WTC11 (cell line): ENCODE measurements at regions of chr4 and their contacts with region 1.

Region 1: DNA sequence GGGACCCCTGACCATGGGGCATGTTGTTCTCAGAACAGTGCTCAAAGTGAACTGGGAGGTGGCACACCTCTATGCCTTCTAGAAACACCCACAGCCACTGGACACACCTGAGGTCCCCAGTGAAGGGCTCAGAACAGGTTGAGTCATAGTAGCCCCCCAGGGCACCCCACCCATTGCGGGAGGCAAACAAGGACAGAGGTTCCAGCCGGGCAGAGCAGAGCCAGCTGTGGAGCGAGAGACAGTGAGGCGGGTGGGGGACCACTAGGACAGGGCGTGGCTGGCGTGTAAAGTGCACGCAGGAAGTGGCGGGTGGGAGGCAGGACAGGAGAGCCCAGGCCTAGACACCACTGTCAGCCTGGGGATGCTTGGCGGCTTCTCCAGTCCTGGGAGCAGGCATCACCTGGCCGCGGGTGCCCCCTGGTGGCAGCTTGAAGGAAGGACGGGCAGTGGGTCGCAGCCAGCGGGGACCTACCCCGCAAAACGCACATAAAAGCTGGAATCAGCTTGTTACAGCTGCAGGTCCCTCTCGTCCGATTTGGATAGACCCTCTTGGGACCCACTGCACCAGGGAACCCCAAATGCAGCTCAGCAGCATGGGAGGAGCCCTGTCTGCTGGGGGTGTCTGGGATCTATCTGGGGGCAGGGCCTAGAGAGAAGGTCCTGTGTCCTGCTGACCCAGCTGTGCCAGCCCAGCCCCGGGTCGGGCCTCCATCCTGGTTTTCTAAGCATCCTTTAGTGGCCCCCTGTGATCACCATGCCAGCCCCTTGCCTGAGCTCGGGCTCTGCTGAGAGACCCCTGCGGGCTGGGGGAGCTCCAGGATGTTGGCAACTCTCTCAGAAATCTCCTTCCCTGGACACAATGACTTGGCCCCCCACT is 57.6 kb downstream of the WFS1 start:
- DNase-seq: peak; percentile 89
- ATAC-seq: peak; percentile 79
- H3K4me3 Mint-ChIP-seq: no peak overlapping the region
- H3K27ac Mint-ChIP-seq: no peak overlapping the region
- H3K4me1 Mint-ChIP-seq: 0 out of 2 replicates have a peak, but pooled peaks cover 3% of the 10 kb centered on the region
- H3K27me3 Mint-ChIP-seq: no peaks in the 10 kb centered on the region
- CTCF ChIP-seq: peak; percentile 95

Region 2: GRCh38 chr4:6134612-6135220 is 192.6 kb before region 1 on chr4:
- CTCF ChIA-PET with region 1: interaction called, 11 read pairs
- POLR2A ChIA-PET with region 1: no interaction called
- DNase-seq: no peak
- ATAC-seq: peak; percentile 77
- H3K4me3 Mint-ChIP-seq: no peak overlapping the region
- H3K27ac Mint-ChIP-seq: no peak overlapping the region
- H3K4me1 Mint-ChIP-seq: peaks cover 21% of the 10 kb centered on the region
- H3K27me3 Mint-ChIP-seq: no peaks in the 10 kb centered on the region; the same call in 1 of the 2 replicates
- CTCF ChIP-seq: no peak

Region 3: DNA sequence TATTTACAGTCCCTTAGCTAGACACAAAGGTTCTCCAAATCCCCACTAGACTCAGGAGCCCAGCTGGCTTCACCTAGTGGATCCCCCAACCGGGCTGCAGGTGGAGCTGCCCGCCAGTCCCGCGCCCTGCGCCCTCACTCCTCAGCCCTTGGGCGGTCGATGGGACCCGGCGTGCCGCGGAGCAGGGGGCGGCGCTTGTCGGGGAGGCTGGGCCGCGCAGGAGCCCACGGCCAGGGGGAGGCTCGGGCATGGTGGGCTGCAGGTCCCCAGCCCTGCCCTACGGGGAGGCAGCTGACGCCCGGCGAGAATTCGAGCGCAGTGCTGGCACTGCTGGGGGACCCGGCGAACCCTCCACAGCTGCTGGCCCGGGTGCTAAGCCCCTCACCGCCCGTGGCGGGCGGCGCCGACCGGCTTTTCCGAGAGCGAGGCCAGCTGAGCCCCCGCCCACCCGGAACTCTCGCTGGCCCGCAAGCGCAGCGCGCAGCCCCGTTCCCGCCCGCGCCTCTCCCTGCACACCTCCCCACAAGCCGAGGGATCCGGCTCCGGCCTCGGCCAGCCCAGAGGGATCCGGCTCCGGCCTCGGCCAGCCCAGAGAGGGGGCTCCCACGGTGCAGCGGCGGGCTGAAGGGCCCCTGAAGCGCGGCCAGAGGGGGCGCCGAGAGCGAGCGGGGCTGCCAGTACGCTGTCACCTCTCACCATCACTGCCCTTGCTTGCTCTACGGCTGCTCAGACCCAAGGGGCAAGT is 18.2 kb before region 1 on chr4:
- CTCF ChIA-PET with region 1: interaction called, 38 read pairs
- POLR2A ChIA-PET with region 1: no interaction called
- DNase-seq: peak; percentile 71
- ATAC-seq: peak; percentile 79
- H3K4me3 Mint-ChIP-seq: peak overlapping the region; percentile 69
- H3K27ac Mint-ChIP-seq: no peak overlapping the region
- H3K4me1 Mint-ChIP-seq: no peaks in the 10 kb centered on the region; the same call in 1 of the 2 replicates
- H3K27me3 Mint-ChIP-seq: peaks cover 31% of the 10 kb centered on the region
- CTCF ChIP-seq: no peak

Region 4: GRCh38 chr4:6362896-6363295 is 35.6 kb after region 1 on chr4:
- CTCF ChIA-PET with region 1: interaction called, 11 read pairs
- POLR2A ChIA-PET with region 1: no interaction called
- DNase-seq: peak; percentile 77
- ATAC-seq: peak; percentile 55
- H3K4me3 Mint-ChIP-seq: no peak overlapping the region
- H3K27ac Mint-ChIP-seq: no peak overlapping the region
- H3K4me1 Mint-ChIP-seq: peaks cover 11% of the 10 kb centered on the region
- H3K27me3 Mint-ChIP-seq: peaks cover 3% of the 10 kb centered on the region; the same call in 1 of the 2 replicates
- CTCF ChIP-seq: no peak

Region 5: GRCh38 chr4:6390356-6390755 is 63.1 kb after region 1 on chr4:
- CTCF ChIA-PET with region 1: interaction called, 10 read pairs
- POLR2A ChIA-PET with region 1: no interaction called
- DNase-seq: no peak
- ATAC-seq: peak; percentile 40; the same call in 1 of the 2 replicates
- H3K4me3 Mint-ChIP-seq: no peak overlapping the region
- H3K27ac Mint-ChIP-seq: no peak overlapping the region
- H3K4me1 Mint-ChIP-seq: no peaks in the 10 kb centered on the region
- H3K27me3 Mint-ChIP-seq: no peaks in the 10 kb centered on the region
- CTCF ChIP-seq: no peak

Region 6: DNA sequence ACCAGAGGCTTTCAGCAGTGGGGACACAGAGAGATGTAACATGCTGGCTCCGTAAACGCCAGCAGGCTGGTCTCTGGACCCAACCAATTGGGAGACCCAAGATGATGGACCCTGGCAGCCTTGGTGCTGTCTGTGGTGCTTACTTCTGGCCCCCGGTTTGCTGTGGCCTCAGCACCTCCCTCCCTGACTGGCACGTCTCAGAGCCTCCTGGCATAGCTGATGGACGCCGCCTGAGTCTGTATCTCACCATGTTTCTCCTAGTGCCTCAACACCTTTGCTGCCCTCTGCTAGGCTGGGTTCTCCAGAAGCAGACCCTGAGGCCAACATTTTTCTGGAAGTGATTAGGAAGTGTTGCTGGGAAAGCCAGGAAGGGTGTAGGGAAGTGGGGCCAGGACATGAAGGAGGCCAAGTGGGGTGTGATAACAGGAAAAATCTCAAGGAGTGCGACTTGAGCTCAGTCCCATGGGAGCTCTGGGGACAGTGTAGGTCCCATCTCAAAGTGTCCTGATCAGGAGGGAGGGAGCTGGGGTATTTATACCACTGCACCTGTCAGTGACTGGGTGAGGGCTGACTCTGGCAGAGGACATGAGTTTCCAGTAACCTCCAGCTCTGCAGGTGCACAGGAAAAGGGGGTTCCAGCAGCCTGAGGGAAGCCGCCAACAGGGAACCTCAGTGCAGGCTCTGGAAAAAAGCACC is 113.4 kb after region 1 on chr4:
- CTCF ChIA-PET with region 1: no interaction called
- POLR2A ChIA-PET with region 1: no interaction called
- DNase-seq: no peak
- ATAC-seq: no peak
- H3K4me3 Mint-ChIP-seq: no peak overlapping the region
- H3K27ac Mint-ChIP-seq: no peak overlapping the region
- H3K4me1 Mint-ChIP-seq: 0 out of 2 replicates have a peak, but pooled peaks cover 3% of the 10 kb centered on the region
- H3K27me3 Mint-ChIP-seq: no peaks in the 10 kb centered on the region; the same call in 1 of the 2 replicates
- CTCF ChIP-seq: no peak

Region 7: DNA sequence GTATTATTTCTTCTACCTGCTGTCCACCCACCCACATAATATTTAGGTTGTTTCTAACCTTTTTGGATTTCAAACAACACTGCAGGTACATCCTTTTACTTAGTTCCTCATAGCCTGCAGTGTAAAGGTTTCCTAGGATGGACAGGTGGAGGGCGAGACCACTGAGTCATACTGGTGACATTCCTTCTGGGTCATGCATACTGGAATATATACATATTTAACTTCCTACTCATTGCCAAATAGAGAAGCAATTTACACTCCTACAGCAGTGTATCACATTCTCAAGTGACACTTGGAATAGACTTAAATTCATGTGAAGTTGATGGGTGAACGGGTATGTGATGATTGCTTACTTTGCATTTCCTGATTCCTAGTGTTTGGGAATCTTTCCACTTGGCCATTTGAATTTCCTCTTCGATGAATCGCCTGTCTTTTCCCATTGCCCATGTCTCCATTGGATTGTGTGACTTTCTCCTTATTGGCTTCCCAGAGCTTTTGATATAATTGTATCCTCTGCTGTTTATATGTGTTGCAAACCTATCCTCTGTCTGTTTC is 153.3 kb after region 1 on chr4:
- CTCF ChIA-PET with region 1: no interaction called
- POLR2A ChIA-PET with region 1: no interaction called
- DNase-seq: no peak
- ATAC-seq: no peak
- H3K4me3 Mint-ChIP-seq: no peak overlapping the region
- H3K27ac Mint-ChIP-seq: no peak overlapping the region
- H3K4me1 Mint-ChIP-seq: peaks cover 10% of the 10 kb centered on the region
- H3K27me3 Mint-ChIP-seq: peaks cover 10% of the 10 kb centered on the region
- CTCF ChIP-seq: no peak

Region 8: GRCh38 chr4:6574747-6575502 is 247.6 kb after region 1 on chr4 and contains the start of gene MAN2B2:
- CTCF ChIA-PET with region 1: interaction called, 12 read pairs
- POLR2A ChIA-PET with region 1: no interaction called
- DNase-seq: peak; percentile 89
- ATAC-seq: peak; percentile 93
- H3K4me3 Mint-ChIP-seq: peak within 1 kb of the TSS; percentile 78
- H3K27ac Mint-ChIP-seq: 0 out of 2 replicates have a peak within 1 kb of the TSS, but pooled peaks have one; percentile 8
- H3K4me1 Mint-ChIP-seq: no peaks in the 10 kb centered on the region; the same call in 1 of the 2 replicates
- H3K27me3 Mint-ChIP-seq: peaks cover 43% of the 10 kb centered on the region
- CTCF ChIP-seq: no peak
- total RNA-seq, gene MAN2B2: 6.3 to 8.0 TPM (median 7.5 TPM) in 3 replicates